ENCODE measurements at regions of chr19 and their contacts with region 1.

Region 1: GRCh38 chr19:28324275-28325060 is 888.5 kb downstream of the UQCRFS1 start:
- DNase-seq: no peak
- H3K4me3 ChIP-seq: no peak overlapping the region
- H3K4me3 Mint-ChIP-seq: no peak overlapping the region
- H3K27ac Mint-ChIP-seq: no peak overlapping the region
- H3K4me1 ChIP-seq: no peaks in the 10 kb centered on the region
- H3K4me1 Mint-ChIP-seq: no peaks in the 10 kb centered on the region
- H3K27me3 ChIP-seq: no peaks in the 10 kb centered on the region
- H3K27me3 Mint-ChIP-seq: no peaks in the 10 kb centered on the region
- CTCF ChIP-seq: no peak

Region 2: GRCh38 chr19:27966390-27966816 is 358.1 kb before region 1 on chr19:
- CTCF ChIA-PET with region 1: interaction called, 3 read pairs
- POLR2A ChIA-PET with region 1: no interaction called
- intact Hi-C with region 1: loop called (anchors 1 kb)
- DNase-seq: peak in 1 of 2 experiments; percentile 10
- H3K4me3 ChIP-seq: no peak overlapping the region
- H3K4me3 Mint-ChIP-seq: no peak overlapping the region
- H3K27ac Mint-ChIP-seq: no peak overlapping the region
- H3K4me1 ChIP-seq: peaks cover 4% of the 10 kb centered on the region
- H3K4me1 Mint-ChIP-seq: no peaks in the 10 kb centered on the region
- H3K27me3 ChIP-seq: no peaks in the 10 kb centered on the region
- H3K27me3 Mint-ChIP-seq: no peaks in the 10 kb centered on the region
- CTCF ChIP-seq: peak; percentile 69 to 73

Region 3: GRCh38 chr19:28641395-28641794 is 316.9 kb after region 1 on chr19:
- CTCF ChIA-PET with region 1: no interaction called
- POLR2A ChIA-PET with region 1: no interaction called
- intact Hi-C with region 1: no loop called
- DNase-seq: no peak
- H3K4me3 ChIP-seq: no peak overlapping the region
- H3K4me3 Mint-ChIP-seq: no peak overlapping the region
- H3K27ac Mint-ChIP-seq: no peak overlapping the region
- H3K4me1 ChIP-seq: no peaks in the 10 kb centered on the region
- H3K4me1 Mint-ChIP-seq: no peaks in the 10 kb centered on the region
- H3K27me3 ChIP-seq: no peaks in the 10 kb centered on the region
- H3K27me3 Mint-ChIP-seq: peaks cover 6% of the 10 kb centered on the region
- CTCF ChIP-seq: no peak

Region 4: DNA sequence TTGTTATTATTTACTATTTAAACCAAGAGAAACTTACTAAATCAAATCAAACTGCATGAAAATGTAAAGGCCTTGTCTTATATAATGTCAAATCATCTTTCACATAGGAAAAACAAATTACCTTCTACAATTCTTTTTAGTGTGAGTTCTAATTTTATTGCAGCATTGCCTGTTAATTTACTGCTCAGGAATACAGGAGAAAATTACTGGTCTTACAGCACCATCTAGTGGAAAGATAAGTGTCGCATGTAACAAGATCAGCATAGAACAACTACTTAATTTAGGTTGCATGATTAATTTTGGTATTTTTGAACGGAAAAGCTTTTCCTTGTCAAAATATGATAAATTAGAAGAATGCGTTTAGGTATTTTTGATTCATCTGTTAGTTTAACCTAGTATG is 385.8 kb after region 1 on chr19:
- CTCF ChIA-PET with region 1: no interaction called
- POLR2A ChIA-PET with region 1: no interaction called
- intact Hi-C with region 1: loop called (anchors 2 kb)
- DNase-seq: peak in 1 of 2 experiments; percentile 54
- H3K4me3 ChIP-seq: no peak overlapping the region
- H3K4me3 Mint-ChIP-seq: no peak overlapping the region
- H3K27ac Mint-ChIP-seq: no peak overlapping the region
- H3K4me1 ChIP-seq: no peaks in the 10 kb centered on the region
- H3K4me1 Mint-ChIP-seq: no peaks in the 10 kb centered on the region
- H3K27me3 ChIP-seq: no peaks in the 10 kb centered on the region
- H3K27me3 Mint-ChIP-seq: no peaks in the 10 kb centered on the region
- CTCF ChIP-seq: peak; percentile 50 to 62